ENCODE measurements at regions of chr11 and their contacts with region 1.

Region 1: DNA sequence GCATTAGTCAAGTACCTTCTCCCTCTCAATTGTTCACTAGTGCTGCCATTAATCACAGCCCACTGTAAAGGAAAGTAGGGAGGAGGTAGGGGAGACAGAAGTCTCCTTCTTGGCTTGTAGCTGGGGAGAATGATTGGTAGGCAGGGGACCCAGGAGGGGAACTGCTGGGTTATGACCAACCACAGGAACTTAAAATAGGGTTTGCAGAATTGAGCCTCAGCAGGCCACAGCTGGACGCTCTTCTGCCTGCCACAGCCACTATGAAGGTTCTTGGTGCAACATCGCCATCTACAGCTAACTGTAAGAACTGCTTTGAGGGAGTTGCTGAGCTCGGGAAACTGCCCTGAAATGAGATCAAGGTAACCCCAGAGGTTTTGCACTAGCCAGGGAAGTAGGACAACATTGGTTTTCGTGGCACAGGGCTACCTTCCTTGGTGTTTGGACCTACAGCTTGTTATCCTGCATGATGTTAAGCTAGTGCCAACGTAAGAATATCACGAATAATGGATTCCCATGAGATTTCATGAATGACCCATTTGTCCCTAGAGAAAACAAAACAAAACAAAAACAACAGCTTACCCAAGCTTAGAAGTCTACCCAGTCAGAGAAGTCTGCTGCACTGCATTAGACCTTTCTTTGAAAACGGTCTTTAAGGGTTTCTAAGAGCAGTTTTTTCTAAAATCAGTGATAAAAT is 787.1 kb upstream of the API5 start:
- DNase-seq: no peak

Region 2: DNA sequence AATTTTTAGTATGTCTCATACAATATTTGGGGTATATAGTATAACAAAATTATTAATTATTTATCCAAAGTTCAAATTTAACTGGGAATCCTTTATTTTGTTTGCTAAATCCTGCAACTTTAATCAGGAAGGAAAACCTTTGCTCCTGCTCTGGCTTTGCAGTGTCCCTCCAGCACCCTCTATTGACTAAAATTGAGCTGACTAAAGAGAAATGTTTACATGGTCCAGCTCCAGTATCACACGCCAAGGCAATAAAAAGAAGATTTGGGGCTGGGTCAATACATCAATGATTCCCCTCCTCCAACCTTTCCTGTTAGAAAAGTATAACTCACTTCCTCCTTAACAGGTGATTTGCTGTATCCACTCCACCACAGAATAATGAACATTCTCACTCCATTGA is 912.3 kb before region 1 on chr11:
- intact Hi-C with region 1: loop called in 1 of 2 experiments (anchors 5 kb)
- DNase-seq: no peak

Measured in posterior vena cava (tissue), 2 donors.